Mammary epithelial cell (primary cell): ENCODE measurements at regions of chr11 and their contacts with region 1.

Region 1: DNA sequence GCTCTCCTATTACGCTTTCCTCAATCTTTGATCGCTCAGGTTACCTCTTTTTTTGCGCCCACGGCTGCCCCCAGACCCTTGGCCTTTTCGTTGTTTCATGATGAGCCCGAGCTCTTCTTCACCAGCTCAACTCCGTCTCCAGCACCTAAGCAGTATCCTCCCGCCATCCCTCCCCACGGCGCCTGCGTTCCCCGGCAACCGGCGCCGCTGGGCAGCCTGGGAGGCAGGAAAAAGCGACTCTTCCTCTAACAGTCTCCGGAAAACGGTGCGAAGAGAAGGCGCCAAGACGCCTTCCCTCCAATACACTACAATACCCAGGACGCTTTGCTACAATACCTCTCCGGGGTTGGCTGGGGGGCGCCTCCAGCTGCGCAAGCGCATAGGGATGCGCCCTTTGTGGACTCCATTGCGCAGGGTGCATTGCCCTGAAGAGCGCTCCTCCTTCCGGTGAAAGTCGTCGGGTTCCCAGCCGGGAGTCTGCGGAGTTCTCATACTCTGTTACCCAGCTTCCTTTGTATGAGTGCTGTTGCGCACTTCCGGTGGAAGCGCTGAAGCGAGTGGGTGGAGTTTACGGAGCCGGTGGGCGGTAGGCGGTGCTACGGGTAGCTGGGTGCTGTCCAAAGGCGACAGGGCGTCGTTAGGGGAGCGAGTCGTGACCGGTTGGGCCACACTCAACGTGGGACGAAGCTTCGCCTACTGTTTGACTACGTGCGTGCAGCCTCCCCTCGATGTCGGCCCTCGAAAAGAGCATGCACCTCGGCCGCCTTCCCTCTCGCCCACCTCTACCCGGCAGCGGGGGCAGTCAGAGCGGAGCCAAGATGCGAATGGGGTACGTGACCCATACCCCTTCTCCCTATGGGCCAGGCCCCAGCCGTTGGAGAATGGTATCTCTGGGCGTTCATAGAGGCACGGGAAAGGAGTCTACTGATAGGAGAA is at the starts of genes C2CD3 and PPME1:
- DNase-seq: peak; percentile 100
- H3K4me3 ChIP-seq: peak within 1 kb of the TSS; percentile 91 to 95 (median 94)
- H3K27ac ChIP-seq: peak within 1 kb of the TSS; percentile 88
- H3K4me1 ChIP-seq: peaks cover 9% of the 10 kb centered on the region
- H3K27me3 ChIP-seq: no peaks in the 10 kb centered on the region
- CTCF ChIP-seq: peak in 1 of 2 donors; percentile 42
- total RNA-seq, gene C2CD3: 17.8 to 19.6 TPM
- total RNA-seq, gene PPME1: 32.8 to 58.5 TPM

Region 2: DNA sequence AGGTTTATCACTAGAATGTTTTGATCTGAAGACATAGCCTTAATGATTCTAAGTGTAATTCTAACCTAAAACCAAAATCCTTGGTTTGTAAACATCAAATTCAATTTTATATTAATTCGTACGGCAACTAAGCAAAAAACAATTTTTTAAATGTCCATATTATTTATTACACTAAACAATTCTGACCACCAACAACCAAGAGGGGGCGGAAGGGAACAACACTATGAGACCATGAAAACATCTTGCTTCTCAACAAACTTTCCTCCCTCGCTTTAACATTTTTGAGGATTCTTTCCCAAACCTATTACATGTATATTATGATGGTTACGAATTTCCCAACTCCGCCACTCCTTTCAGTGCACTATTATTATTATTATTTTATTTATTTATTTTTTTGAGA is 181.8 kb before region 1 on chr11:
- CTCF ChIA-PET with region 1: interaction called, 3 read pairs
- dilution Hi-C with region 1: no loop called
- in situ Hi-C with region 1: no loop called
- intact Hi-C with region 1: loop called (anchors 2 kb)
- DNase-seq: no peak
- H3K4me3 ChIP-seq: no peak overlapping the region
- H3K27ac ChIP-seq: no peak overlapping the region
- H3K4me1 ChIP-seq: no peaks in the 10 kb centered on the region
- H3K27me3 ChIP-seq: no peaks in the 10 kb centered on the region
- CTCF ChIP-seq: peak in 1 of 2 donors; percentile 28

Region 3: GRCh38 chr11:74102321-74102720 is 68.6 kb before region 1 on chr11:
- CTCF ChIA-PET with region 1: no interaction called
- dilution Hi-C with region 1: no loop called
- in situ Hi-C with region 1: no loop called
- intact Hi-C with region 1: no loop called
- DNase-seq: no peak
- H3K4me3 ChIP-seq: no peak overlapping the region
- H3K27ac ChIP-seq: no peak overlapping the region
- H3K4me1 ChIP-seq: no peaks in the 10 kb centered on the region
- H3K27me3 ChIP-seq: no peaks in the 10 kb centered on the region
- CTCF ChIP-seq: no peak

Region 4: GRCh38 chr11:74138572-74138971 is 32.4 kb before region 1 on chr11:
- CTCF ChIA-PET with region 1: interaction called, 19 read pairs
- dilution Hi-C with region 1: no loop called
- in situ Hi-C with region 1: no loop called
- intact Hi-C with region 1: loop called (anchors 2 kb)
- DNase-seq: peak; percentile 95
- H3K4me3 ChIP-seq: no peak overlapping the region
- H3K27ac ChIP-seq: peak overlapping the region; percentile 83
- H3K4me1 ChIP-seq: peaks cover 54% of the 10 kb centered on the region
- H3K27me3 ChIP-seq: no peaks in the 10 kb centered on the region
- CTCF ChIP-seq: no peak